Activated CD8-positive, alpha-beta memory T cell treated with anti-CD3 and anti-CD28 coated beads, Interleukin-2, amount 10 ng/mL, durations not matched to agents 7 days and 5 days (primary cell): ENCODE measurements at regions of chr12 and their contacts with region 1.

Region 1: GRCh38 chr12:54439521-54440255 is 20.6 kb upstream of the ITGA5 start:
- DNase-seq: no peak
- ATAC-seq: peak; percentile 87
- H3K4me3 Mint-ChIP-seq: no peak overlapping the region
- H3K27ac Mint-ChIP-seq: no peak overlapping the region
- H3K4me1 Mint-ChIP-seq: peaks cover 2% of the 10 kb centered on the region
- H3K27me3 Mint-ChIP-seq: peaks cover 16% of the 10 kb centered on the region

Region 2: GRCh38 chr12:54368709-54369583 is 70.7 kb before region 1 on chr12:
- CTCF ChIA-PET with region 1: interaction called, 23 read pairs
- DNase-seq: peak; percentile 93
- ATAC-seq: peak; percentile 92
- H3K4me3 Mint-ChIP-seq: no peak overlapping the region
- H3K27ac Mint-ChIP-seq: no peak overlapping the region
- H3K4me1 Mint-ChIP-seq: peaks cover 28% of the 10 kb centered on the region
- H3K27me3 Mint-ChIP-seq: peaks cover 18% of the 10 kb centered on the region

Region 3: DNA sequence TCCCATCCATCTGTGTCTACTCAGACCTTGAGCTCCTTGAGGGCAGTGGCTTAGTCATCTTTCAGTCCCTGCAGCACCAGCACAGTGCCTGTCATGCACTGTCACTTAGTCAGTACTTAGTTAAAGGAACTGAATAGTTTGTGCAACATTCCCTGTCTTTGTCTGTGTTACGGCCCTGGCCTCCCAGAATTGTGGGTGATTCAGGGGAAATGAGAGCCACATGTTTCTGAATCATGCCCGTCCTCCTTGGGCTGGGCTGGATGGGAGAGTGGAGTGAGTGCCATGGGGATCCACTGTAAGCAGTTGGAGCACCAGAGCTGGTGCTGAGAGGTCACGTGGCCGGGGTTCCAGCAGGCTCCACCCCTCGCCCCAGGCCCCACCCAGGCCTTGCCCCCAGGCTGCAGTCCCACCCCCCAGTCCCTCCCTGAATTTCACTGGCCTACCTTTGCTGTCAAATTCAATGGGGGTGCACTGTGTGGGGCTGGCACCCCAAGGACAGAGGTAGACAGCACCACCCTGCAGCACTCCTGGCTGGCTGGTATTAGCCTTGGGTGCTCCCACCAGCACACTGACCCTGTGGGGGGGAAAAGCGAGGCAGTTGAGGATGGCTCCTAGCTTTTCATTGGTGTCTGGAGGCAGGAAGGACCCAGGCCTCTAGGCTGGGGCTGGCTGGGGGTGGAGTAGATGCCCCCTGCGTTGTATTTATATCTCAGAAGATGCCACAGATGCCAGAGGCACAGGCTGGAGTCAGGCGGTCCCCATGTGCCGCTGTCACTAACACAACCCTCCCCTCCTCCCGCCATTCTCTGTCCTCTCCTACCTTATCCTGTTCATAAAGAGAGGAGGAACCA is 28.1 kb before region 1 on chr12:
- CTCF ChIA-PET with region 1: interaction called, 705 read pairs
- DNase-seq: peak; percentile 59
- ATAC-seq: peak; percentile 12
- H3K4me3 Mint-ChIP-seq: no peak overlapping the region
- H3K27ac Mint-ChIP-seq: peak overlapping the region; percentile 85
- H3K4me1 Mint-ChIP-seq: peaks cover 51% of the 10 kb centered on the region
- H3K27me3 Mint-ChIP-seq: no peaks in the 10 kb centered on the region

Region 4: GRCh38 chr12:54425702-54426101 is 14.0 kb before region 1 on chr12:
- CTCF ChIA-PET with region 1: interaction called, 55 read pairs
- DNase-seq: no peak
- ATAC-seq: no peak
- H3K4me3 Mint-ChIP-seq: no peak overlapping the region
- H3K27ac Mint-ChIP-seq: no peak overlapping the region
- H3K4me1 Mint-ChIP-seq: peaks cover 10% of the 10 kb centered on the region
- H3K27me3 Mint-ChIP-seq: peaks cover 67% of the 10 kb centered on the region

Region 5: DNA sequence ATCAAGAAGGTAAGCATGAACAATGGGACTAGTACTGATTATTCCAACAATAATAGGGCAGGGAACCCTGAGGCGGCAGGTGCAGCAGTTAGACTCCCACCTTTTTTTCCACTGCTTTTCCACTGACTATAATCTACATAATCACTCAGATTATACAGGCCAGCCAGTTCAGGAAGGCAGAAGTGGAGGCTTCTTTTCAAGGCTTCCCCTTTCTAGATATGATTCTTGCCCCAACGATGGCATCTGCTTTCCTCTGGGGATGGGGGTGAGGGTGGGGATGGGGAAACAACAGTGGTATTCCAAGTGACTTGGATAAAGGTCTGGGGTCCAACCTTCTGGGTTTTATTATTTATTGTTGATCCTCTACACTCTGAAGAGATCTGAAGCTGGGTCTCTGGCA is 58.2 kb after region 1 on chr12:
- CTCF ChIA-PET with region 1: interaction called, 13 read pairs
- DNase-seq: no peak
- ATAC-seq: peak; percentile 18
- H3K4me3 Mint-ChIP-seq: peak overlapping the region; percentile 100
- H3K27ac Mint-ChIP-seq: peak overlapping the region; percentile 97
- H3K4me1 Mint-ChIP-seq: peaks cover 40% of the 10 kb centered on the region
- H3K27me3 Mint-ChIP-seq: no peaks in the 10 kb centered on the region

Region 6: GRCh38 chr12:54749191-54749818 is 309.6 kb after region 1 on chr12:
- CTCF ChIA-PET with region 1: no interaction called
- DNase-seq: peak; percentile 53
- ATAC-seq: peak; percentile 96
- H3K4me3 Mint-ChIP-seq: peak overlapping the region; percentile 39
- H3K27ac Mint-ChIP-seq: peak overlapping the region; percentile 67
- H3K4me1 Mint-ChIP-seq: peaks cover 21% of the 10 kb centered on the region
- H3K27me3 Mint-ChIP-seq: peaks cover 5% of the 10 kb centered on the region

Region 7: GRCh38 chr12:55188974-55189556 is 749.4 kb after region 1 on chr12:
- CTCF ChIA-PET with region 1: no interaction called
- DNase-seq: peak; percentile 55
- ATAC-seq: peak; percentile 75
- H3K4me3 Mint-ChIP-seq: no peak overlapping the region
- H3K27ac Mint-ChIP-seq: no peak overlapping the region
- H3K4me1 Mint-ChIP-seq: no peaks in the 10 kb centered on the region
- H3K27me3 Mint-ChIP-seq: peaks cover 16% of the 10 kb centered on the region